Heart right ventricle (tissue), 16 donors: ENCODE measurements at regions of chr14 and their contacts with region 1.

Region 1: GRCh38 chr14:48382961-48383360 is 707.6 kb upstream of the MDGA2 start:
- DNase-seq: no peak
- ATAC-seq: no peak
- H3K4me3 ChIP-seq: no peak overlapping the region
- H3K27ac ChIP-seq: no peak overlapping the region
- H3K4me1 ChIP-seq: no peaks in the 10 kb centered on the region
- H3K27me3 ChIP-seq: no peaks in the 10 kb centered on the region
- CTCF ChIP-seq: no peak

Region 2: GRCh38 chr14:48350971-48351370 is 32.0 kb before region 1 on chr14:
- intact Hi-C with region 1: loop called in 1 of 10 experiments (anchors 1 kb)
- DNase-seq: no peak
- ATAC-seq: no peak
- H3K4me3 ChIP-seq: no peak overlapping the region
- H3K27ac ChIP-seq: no peak overlapping the region
- H3K4me1 ChIP-seq: no peaks in the 10 kb centered on the region
- H3K27me3 ChIP-seq: no peaks in the 10 kb centered on the region
- CTCF ChIP-seq: no peak

Region 3: DNA sequence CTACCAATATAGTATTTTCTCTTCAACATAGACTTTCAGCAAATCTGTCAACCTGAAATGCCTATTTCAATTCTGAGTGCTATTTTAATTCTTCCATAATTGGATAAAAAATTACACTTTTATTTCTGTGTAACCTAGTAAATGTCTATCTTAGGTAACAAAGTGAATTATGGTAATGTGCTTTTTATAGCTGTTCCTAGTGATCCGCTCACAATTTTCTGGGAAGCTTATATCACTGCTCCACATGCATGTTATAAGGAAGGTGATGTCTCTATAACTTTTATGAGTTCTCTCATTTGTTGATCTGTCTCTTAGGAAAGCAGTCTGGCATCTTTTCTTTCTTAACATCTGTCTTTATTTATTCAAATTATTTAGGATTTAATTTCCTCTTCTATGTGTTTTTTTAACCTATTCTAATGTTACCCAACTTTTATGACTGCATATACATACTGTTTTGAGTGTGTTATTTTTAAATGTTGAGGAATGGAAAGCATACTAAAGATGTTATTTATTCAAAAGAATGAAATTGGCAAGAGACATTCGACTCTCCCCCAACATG is 69.6 kb after region 1 on chr14:
- intact Hi-C with region 1: no loop called
- DNase-seq: no peak
- ATAC-seq: no peak
- H3K4me3 ChIP-seq: no peak overlapping the region
- H3K27ac ChIP-seq: no peak overlapping the region
- H3K4me1 ChIP-seq: no peaks in the 10 kb centered on the region
- H3K27me3 ChIP-seq: no peaks in the 10 kb centered on the region
- CTCF ChIP-seq: no peak